ENCODE measurements at regions of chr1 and their contacts with region 1.

Region 1: DNA sequence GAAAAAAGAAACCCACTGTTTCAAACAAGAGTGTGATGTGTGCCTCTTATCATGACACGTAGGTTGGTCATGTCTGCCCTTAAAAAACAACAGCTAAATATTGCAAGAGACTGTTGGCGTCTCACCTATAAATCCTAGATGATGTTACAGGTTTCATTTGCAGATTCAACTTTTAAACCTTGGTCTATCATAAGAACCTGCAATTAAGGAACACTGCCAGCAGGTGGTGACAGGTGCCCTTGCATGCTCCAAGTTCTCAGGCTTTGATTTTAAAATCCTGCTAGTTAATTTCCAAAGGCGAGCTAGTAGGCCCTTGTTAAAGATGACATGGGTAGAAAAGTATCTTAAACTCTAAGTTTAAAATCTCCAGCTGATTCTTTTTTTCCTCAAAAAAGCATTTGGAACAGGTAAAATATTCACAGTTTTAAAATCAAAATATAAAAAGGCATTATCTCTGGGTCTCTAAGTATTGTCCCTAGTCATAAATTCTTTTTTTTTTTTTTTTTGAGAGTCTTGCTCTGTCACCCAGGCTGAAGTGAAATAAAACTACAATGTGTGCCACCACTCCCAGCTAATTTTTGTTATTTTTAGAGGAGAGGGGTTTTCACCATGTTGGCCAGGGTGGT is 39.1 kb downstream of the CLSTN1 start:
- DNase-seq: peak; percentile 37 to 39
- H3K4me3 ChIP-seq: no peak overlapping the region
- H3K27ac ChIP-seq: no peak overlapping the region
- H3K4me1 ChIP-seq: no peaks in the 10 kb centered on the region
- H3K27me3 ChIP-seq: no peaks in the 10 kb centered on the region
- CTCF ChIP-seq: peak; percentile 80

Region 2: GRCh38 chr1:9615316-9616063 is 169.1 kb before region 1 on chr1:
- CTCF ChIA-PET with region 1: interaction called, 13 read pairs
- POLR2A ChIA-PET with region 1: no interaction called
- intact Hi-C with region 1: no loop called
- DNase-seq: peak in 1 of 2 experiments; percentile 48
- H3K4me3 ChIP-seq: no peak overlapping the region
- H3K27ac ChIP-seq: no peak overlapping the region
- H3K4me1 ChIP-seq: no peaks in the 10 kb centered on the region
- H3K27me3 ChIP-seq: no peaks in the 10 kb centered on the region
- CTCF ChIP-seq: peak; percentile 67

Region 3: DNA sequence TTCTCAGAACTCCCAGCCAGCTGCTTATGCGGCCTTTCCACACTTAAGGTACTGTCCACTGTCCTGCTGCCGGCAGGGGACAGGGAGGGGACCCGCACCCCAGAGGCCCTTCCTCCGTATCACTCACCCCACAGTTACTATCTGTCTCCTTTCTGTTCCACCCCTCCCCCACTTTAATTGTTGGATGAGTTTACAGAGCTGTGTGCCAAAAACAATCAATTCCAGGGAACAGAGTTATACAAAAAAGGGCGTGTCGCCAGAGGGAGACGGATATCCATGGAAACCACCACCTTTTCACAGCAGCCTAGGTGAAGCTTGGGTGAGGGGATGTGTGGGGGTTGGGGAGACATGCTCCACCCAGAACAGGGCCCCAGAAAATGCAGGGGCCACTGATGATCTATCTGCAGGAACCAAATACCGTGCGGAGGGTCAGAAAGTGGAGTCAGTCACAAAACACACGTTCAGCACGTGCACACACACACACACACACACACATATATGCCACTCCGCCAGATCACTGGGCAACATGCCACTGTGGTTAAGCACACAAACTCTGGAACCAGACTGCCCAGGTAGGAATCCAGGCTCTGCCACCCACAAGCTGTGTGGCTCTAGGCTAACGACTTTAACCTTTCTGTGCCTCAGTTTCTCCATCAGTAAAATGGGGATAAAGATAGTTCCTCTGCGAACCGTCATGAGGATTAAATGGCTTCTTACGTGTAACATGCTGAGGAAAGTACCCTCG is 981.3 kb after region 1 on chr1:
- CTCF ChIA-PET with region 1: no interaction called
- POLR2A ChIA-PET with region 1: no interaction called
- intact Hi-C with region 1: no loop called
- DNase-seq: no peak
- H3K4me3 ChIP-seq: no peak overlapping the region
- H3K27ac ChIP-seq: no peak overlapping the region
- H3K4me1 ChIP-seq: peaks cover 25% of the 10 kb centered on the region
- H3K27me3 ChIP-seq: no peaks in the 10 kb centered on the region
- CTCF ChIP-seq: no peak